PC-9 (cell line): ENCODE measurements at regions of chr3 and their contacts with region 1.

Region 1: GRCh38 chr3:69558912-69559311 is 173.0 kb upstream of the FRMD4B start:
- DNase-seq: no peak
- H3K4me3 ChIP-seq: no peak overlapping the region
- H3K27ac ChIP-seq: no peak overlapping the region
- H3K4me1 ChIP-seq: no peaks in the 10 kb centered on the region
- H3K27me3 ChIP-seq: no peaks in the 10 kb centered on the region
- CTCF ChIP-seq: no peak

Region 2: DNA sequence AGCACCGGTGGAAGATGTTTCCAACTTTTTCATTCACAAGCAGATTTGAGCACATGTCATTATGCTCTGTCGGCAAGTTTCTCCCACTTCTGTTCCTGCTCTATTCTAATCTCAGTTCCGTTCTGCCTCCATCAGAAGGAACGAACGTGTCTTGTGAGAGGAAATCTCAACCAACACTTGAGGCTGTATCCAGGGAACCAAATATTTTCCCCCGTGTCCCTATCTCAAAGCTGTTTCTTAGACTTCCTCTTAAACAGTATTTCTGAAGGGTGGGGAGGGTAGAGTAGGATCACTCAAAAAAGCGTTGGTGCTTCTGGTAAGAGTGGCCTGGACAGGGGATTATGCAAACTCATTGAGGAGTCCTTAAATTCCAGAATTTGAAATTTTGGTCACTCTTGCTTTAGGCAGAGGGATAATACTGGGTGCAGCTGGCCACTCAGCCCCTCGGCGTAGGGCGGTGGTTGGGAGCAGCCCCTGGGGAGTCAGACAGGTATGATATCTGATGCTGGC is 228.0 kb before region 1 on chr3:
- CTCF ChIA-PET with region 1: no interaction called
- POLR2A ChIA-PET with region 1: interaction called, 10 read pairs
- intact Hi-C with region 1: no loop called
- DNase-seq: no peak
- H3K4me3 ChIP-seq: no peak overlapping the region
- H3K27ac ChIP-seq: no peak overlapping the region
- H3K4me1 ChIP-seq: no peaks in the 10 kb centered on the region
- H3K27me3 ChIP-seq: no peaks in the 10 kb centered on the region
- CTCF ChIP-seq: no peak

Region 3: DNA sequence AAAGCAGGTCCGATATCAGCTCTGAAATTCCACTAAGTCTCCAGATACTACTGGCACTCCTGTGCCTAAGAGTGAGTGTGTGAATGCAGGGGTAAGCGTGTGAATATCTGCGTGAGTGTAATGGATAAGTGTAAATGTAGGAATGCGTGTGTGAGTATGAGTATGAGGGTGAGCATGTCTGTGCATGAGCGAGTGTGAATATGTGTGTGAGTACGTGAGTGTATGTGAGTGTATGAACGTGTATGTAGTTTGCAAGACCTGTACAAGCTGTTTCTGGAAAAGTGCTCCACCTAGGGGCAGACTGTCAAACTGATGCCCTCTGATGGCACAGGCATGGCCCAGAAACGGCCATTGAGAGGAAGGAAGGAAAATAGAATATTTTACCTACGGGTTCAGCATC is 148.7 kb before region 1 on chr3:
- CTCF ChIA-PET with region 1: no interaction called
- POLR2A ChIA-PET with region 1: no interaction called
- intact Hi-C with region 1: no loop called
- DNase-seq: peak in 1 of 2 experiments; percentile 50
- H3K4me3 ChIP-seq: no peak overlapping the region
- H3K27ac ChIP-seq: no peak overlapping the region
- H3K4me1 ChIP-seq: no peaks in the 10 kb centered on the region
- H3K27me3 ChIP-seq: no peaks in the 10 kb centered on the region
- CTCF ChIP-seq: peak; percentile 68

Region 4: DNA sequence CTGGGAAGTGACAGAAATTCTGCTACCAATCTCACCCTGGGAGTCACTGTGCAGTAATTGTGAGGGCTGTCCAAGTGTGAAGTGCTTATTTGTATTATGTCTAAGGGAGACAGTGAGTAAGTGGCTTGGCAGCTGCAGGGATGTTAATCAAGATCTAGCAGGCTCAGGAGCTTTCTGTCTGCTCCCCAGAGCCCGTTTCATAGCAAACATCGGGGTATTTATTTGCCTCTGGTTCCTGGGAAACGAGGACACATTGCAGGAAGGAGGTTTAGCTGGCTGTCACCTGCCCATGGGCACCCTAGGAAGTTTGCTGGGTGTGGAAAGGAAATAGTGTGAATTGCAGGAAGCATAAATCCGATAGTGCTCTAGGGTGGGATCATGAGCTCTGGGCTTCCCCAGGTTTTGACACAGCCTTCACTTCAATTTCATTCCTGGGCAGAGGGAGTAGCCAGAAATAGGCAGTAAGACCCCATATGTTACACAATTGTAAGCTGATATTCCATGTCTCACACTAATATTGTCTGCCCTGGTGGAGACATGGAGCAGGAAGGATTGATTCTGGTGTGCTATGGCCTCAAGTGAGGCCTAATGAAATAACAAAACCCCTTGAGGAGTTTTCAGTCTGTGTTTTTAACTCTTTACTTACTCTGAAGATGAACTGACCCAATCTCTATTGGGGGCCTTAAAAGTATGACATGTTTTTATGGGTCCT is 106.3 kb after region 1 on chr3:
- CTCF ChIA-PET with region 1: no interaction called
- POLR2A ChIA-PET with region 1: no interaction called
- intact Hi-C with region 1: no loop called
- DNase-seq: peak; percentile 48 to 86
- H3K4me3 ChIP-seq: no peak overlapping the region
- H3K27ac ChIP-seq: no peak overlapping the region
- H3K4me1 ChIP-seq: peaks cover 5% of the 10 kb centered on the region; the same call in 1 of the 2 replicates
- H3K27me3 ChIP-seq: no peaks in the 10 kb centered on the region
- CTCF ChIP-seq: no peak